AG04450 (cell line): ENCODE measurements at regions of chr2 and their contacts with region 1.

Region 1: GRCh38 chr2:182650704-182651103 is 65.4 kb upstream of the DNAJC10 start:
- DNase-seq: no peak
- H3K4me3 ChIP-seq: no peak overlapping the region
- H3K27ac ChIP-seq: no peak overlapping the region
- H3K27me3 ChIP-seq: no peaks in the 10 kb centered on the region
- CTCF ChIP-seq: peak; percentile 48

Region 2: GRCh38 chr2:182240862-182241371 is 409.8 kb before region 1 on chr2:
- CTCF ChIA-PET with region 1: interaction called, 12 read pairs
- POLR2A ChIA-PET with region 1: no interaction called
- DNase-seq: no peak
- H3K4me3 ChIP-seq: no peak overlapping the region
- H3K27ac ChIP-seq: no peak overlapping the region
- H3K27me3 ChIP-seq: no peaks in the 10 kb centered on the region
- CTCF ChIP-seq: peak; percentile 39; the same call in 1 of the 2 replicates

Region 3: GRCh38 chr2:182280118-182280517 is 370.6 kb before region 1 on chr2:
- CTCF ChIA-PET with region 1: no interaction called
- POLR2A ChIA-PET with region 1: no interaction called
- DNase-seq: no peak
- H3K4me3 ChIP-seq: no peak overlapping the region
- H3K27ac ChIP-seq: no peak overlapping the region
- H3K27me3 ChIP-seq: no peaks in the 10 kb centered on the region
- CTCF ChIP-seq: no peak

Region 4: GRCh38 chr2:182444806-182445205 is 205.9 kb before region 1 on chr2:
- CTCF ChIA-PET with region 1: no interaction called
- POLR2A ChIA-PET with region 1: no interaction called
- DNase-seq: no peak
- H3K4me3 ChIP-seq: no peak overlapping the region
- H3K27ac ChIP-seq: no peak overlapping the region
- H3K27me3 ChIP-seq: no peaks in the 10 kb centered on the region
- CTCF ChIP-seq: no peak